CD4-positive, alpha-beta T cell (primary cell): ENCODE measurements at regions of chr17 and their contacts with region 1.

Region 1: DNA sequence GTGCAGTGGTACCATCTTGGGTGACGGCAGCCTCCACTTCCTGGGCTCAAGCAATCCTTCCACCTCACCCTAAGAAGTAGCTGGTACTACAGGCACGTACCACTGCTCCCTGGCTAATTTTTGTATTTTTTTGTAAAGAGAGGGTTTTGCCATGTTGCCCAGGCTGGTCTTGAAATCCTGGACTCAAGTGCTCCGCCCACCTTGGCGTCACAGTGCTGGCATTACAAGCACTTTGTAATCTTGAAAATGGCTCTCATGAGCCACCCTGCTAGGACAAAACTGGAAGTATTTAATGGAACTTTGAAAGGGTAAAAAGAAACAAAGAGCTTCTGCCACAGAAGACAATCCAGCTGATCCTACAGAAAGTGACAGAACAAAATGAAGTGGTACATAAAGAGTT is 9.2 kb downstream of the SUMO2 start:
- DNase-seq: no peak
- ATAC-seq: no peak
- H3K4me3 ChIP-seq: no peak overlapping the region
- H3K4me3 Mint-ChIP-seq: no peak overlapping the region
- H3K27ac ChIP-seq: no peak overlapping the region
- H3K27ac Mint-ChIP-seq: no peak overlapping the region
- H3K4me1 ChIP-seq: peaks cover 20% of the 10 kb centered on the region
- H3K4me1 Mint-ChIP-seq: peaks cover 19% of the 10 kb centered on the region
- H3K27me3 ChIP-seq: no peaks in the 10 kb centered on the region
- H3K27me3 Mint-ChIP-seq: no peaks in the 10 kb centered on the region
- CTCF ChIP-seq: no peak

Region 2: GRCh38 chr17:74842599-74843351 is 330.8 kb before region 1 on chr17:
- CTCF ChIA-PET with region 1: no interaction called
- POLR2A ChIA-PET with region 1: no interaction called
- intact Hi-C with region 1: no loop called
- DNase-seq: peak in 3 of 14 experiments; percentile 31 to 51 (median 51)
- ATAC-seq: peak; percentile 41
- H3K4me3 ChIP-seq: no peak overlapping the region
- H3K4me3 Mint-ChIP-seq: no peak overlapping the region
- H3K27ac ChIP-seq: no peak overlapping the region
- H3K27ac Mint-ChIP-seq: no peak overlapping the region
- H3K4me1 ChIP-seq: peaks cover 22% of the 10 kb centered on the region
- H3K4me1 Mint-ChIP-seq: peaks cover 10% of the 10 kb centered on the region
- H3K27me3 ChIP-seq: peaks cover 3 to 4% of the 10 kb centered on the region in 2 experiments
- H3K27me3 Mint-ChIP-seq: peaks cover 22% of the 10 kb centered on the region
- CTCF ChIP-seq: no peak

Region 3: GRCh38 chr17:75131280-75132017 is 42.1 kb before region 1 on chr17 and contains the start of gene NT5C:
- CTCF ChIA-PET with region 1: interaction called, 15 read pairs
- POLR2A ChIA-PET with region 1: interaction called, 7 read pairs
- intact Hi-C with region 1: loop called in 1 of 2 experiments (anchors 5 kb)
- DNase-seq: peak in 10 of 14 experiments; percentile 44 to 78 (median 56)
- ATAC-seq: peak; percentile 72
- H3K4me3 ChIP-seq: peak within 1 kb of the TSS; percentile 83
- H3K4me3 Mint-ChIP-seq: peak within 1 kb of the TSS; percentile 88
- H3K27ac ChIP-seq: peak within 1 kb of the TSS; percentile 45 to 55
- H3K27ac Mint-ChIP-seq: peak within 1 kb of the TSS; percentile 70
- H3K4me1 ChIP-seq: peaks cover 21% of the 10 kb centered on the region
- H3K4me1 Mint-ChIP-seq: peaks cover 7% of the 10 kb centered on the region
- H3K27me3 ChIP-seq: no peaks in the 10 kb centered on the region
- H3K27me3 Mint-ChIP-seq: no peaks in the 10 kb centered on the region
- CTCF ChIP-seq: peak; percentile 70
- total RNA-seq, gene NT5C: 14.1 to 16.1 TPM

Region 4: DNA sequence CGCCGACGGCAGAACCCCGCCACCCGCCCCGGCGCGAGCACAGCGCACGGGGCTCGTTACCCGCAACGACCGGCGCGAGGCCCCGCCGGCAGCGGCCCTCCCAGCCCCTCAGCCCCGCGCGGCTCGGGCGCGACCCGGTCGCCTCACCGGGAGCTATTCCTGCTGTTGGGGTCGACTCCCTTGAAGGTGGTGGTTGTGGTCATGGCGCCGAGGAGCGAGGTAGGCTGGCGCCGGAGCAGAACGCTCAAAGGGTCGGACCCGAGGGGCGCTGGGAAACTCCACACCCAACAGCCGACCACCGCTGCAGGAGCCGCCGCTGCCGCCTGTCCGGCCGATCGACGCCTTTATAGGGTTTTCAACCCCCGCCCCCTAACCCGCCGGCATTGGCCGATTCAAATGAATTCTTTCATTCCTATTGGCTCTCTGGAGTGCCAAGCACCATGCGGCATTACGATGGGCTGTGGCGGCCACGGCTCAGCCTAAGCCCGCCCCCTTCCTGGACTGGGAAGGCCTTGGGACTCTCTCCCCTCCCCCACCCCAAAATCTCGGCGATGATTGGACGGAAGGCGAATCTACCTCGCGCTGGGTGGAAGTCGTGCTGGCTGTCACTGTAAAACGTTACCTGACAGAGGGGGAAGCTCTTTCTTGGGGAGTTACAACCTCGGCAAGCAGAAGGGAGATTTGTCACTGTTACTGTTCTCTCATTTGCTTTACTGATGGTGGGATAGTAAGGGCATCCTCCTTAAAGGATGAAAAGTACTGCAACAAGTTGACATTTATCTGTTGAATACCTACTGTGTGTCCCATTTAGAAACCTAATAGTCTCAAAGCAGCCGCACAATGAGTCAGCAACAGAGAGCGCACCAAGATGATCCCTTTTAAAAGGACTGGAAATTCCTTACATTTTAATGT is 19.1 kb before region 1 on chr17 and contains the start of gene JPT1:
- CTCF ChIA-PET with region 1: interaction called, 12 read pairs
- POLR2A ChIA-PET with region 1: interaction called, 17 read pairs
- intact Hi-C with region 1: no loop called
- DNase-seq: peak; percentile 94 to 99 (median 98)
- ATAC-seq: peak; percentile 97
- H3K4me3 ChIP-seq: peak within 1 kb of the TSS; percentile 96
- H3K4me3 Mint-ChIP-seq: peak within 1 kb of the TSS; percentile 97
- H3K27ac ChIP-seq: peak within 1 kb of the TSS; percentile 45 to 48
- H3K27ac Mint-ChIP-seq: peak within 1 kb of the TSS; percentile 79
- H3K4me1 ChIP-seq: peaks cover 32% of the 10 kb centered on the region
- H3K4me1 Mint-ChIP-seq: peaks cover 32% of the 10 kb centered on the region
- H3K27me3 ChIP-seq: no peaks in the 10 kb centered on the region
- H3K27me3 Mint-ChIP-seq: no peaks in the 10 kb centered on the region
- CTCF ChIP-seq: no peak
- total RNA-seq, gene JPT1: 21.3 to 25.5 TPM

Region 5: GRCh38 chr17:75199886-75200618 is 26.5 kb after region 1 on chr17:
- CTCF ChIA-PET with region 1: interaction called, 23 read pairs
- POLR2A ChIA-PET with region 1: no interaction called
- intact Hi-C with region 1: loop called in 1 of 2 experiments (anchors 2 kb)
- DNase-seq: no peak
- ATAC-seq: no peak
- H3K4me3 ChIP-seq: no peak overlapping the region
- H3K4me3 Mint-ChIP-seq: no peak overlapping the region
- H3K27ac ChIP-seq: no peak overlapping the region
- H3K27ac Mint-ChIP-seq: no peak overlapping the region
- H3K4me1 ChIP-seq: peaks cover 8% of the 10 kb centered on the region
- H3K4me1 Mint-ChIP-seq: peaks cover 7% of the 10 kb centered on the region
- H3K27me3 ChIP-seq: no peaks in the 10 kb centered on the region
- H3K27me3 Mint-ChIP-seq: no peaks in the 10 kb centered on the region
- CTCF ChIP-seq: no peak

Region 6: GRCh38 chr17:75205037-75205792 is 31.7 kb after region 1 on chr17 and contains the start of gene NUP85:
- CTCF ChIA-PET with region 1: interaction called, 23 read pairs
- POLR2A ChIA-PET with region 1: interaction called, 4 read pairs
- intact Hi-C with region 1: loop called in 1 of 2 experiments (anchors 2 kb)
- DNase-seq: peak; percentile 87 to 95 (median 90)
- ATAC-seq: peak; percentile 89
- H3K4me3 ChIP-seq: peak within 1 kb of the TSS; percentile 95
- H3K4me3 Mint-ChIP-seq: peak within 1 kb of the TSS; percentile 96
- H3K27ac ChIP-seq: peak within 1 kb of the TSS; percentile 91 to 94
- H3K27ac Mint-ChIP-seq: peak within 1 kb of the TSS; percentile 95
- H3K4me1 ChIP-seq: peaks cover 28% of the 10 kb centered on the region
- H3K4me1 Mint-ChIP-seq: peaks cover 27% of the 10 kb centered on the region
- H3K27me3 ChIP-seq: no peaks in the 10 kb centered on the region
- H3K27me3 Mint-ChIP-seq: no peaks in the 10 kb centered on the region
- CTCF ChIP-seq: no peak
- total RNA-seq, gene NUP85: 84.7 to 89.2 TPM

Region 7: GRCh38 chr17:75219815-75220214 is 46.3 kb after region 1 on chr17:
- CTCF ChIA-PET with region 1: no interaction called
- POLR2A ChIA-PET with region 1: no interaction called
- intact Hi-C with region 1: no loop called
- DNase-seq: no peak
- ATAC-seq: no peak
- H3K4me3 ChIP-seq: no peak overlapping the region
- H3K4me3 Mint-ChIP-seq: no peak overlapping the region
- H3K27ac ChIP-seq: no peak overlapping the region
- H3K27ac Mint-ChIP-seq: no peak overlapping the region
- H3K4me1 ChIP-seq: no peaks in the 10 kb centered on the region
- H3K4me1 Mint-ChIP-seq: no peaks in the 10 kb centered on the region
- H3K27me3 ChIP-seq: no peaks in the 10 kb centered on the region
- H3K27me3 Mint-ChIP-seq: no peaks in the 10 kb centered on the region
- CTCF ChIP-seq: no peak

Region 8: GRCh38 chr17:75238684-75239191 is 65.2 kb after region 1 on chr17:
- CTCF ChIA-PET with region 1: no interaction called
- POLR2A ChIA-PET with region 1: no interaction called
- intact Hi-C with region 1: no loop called
- DNase-seq: peak; percentile 45 to 82 (median 54)
- ATAC-seq: peak; percentile 52
- H3K4me3 ChIP-seq: no peak overlapping the region
- H3K4me3 Mint-ChIP-seq: peak overlapping the region; percentile 12
- H3K27ac ChIP-seq: peak overlapping the region in 1 of 2 donors; percentile 26
- H3K27ac Mint-ChIP-seq: peak overlapping the region; percentile 68
- H3K4me1 ChIP-seq: peaks cover 47% of the 10 kb centered on the region
- H3K4me1 Mint-ChIP-seq: peaks cover 18% of the 10 kb centered on the region
- H3K27me3 ChIP-seq: no peaks in the 10 kb centered on the region
- H3K27me3 Mint-ChIP-seq: no peaks in the 10 kb centered on the region
- CTCF ChIP-seq: peak; percentile 71